Gastrocnemius medialis (tissue), 4 donors: ENCODE measurements at regions of chr2 and their contacts with region 1.

Region 1: GRCh38 chr2:160994141-160995002 is 165.9 kb upstream of the TANK start:
- DNase-seq: peak; percentile 71 to 72
- ATAC-seq: peak; percentile 100
- H3K4me3 ChIP-seq: peak overlapping the region in 1 of 4 donors; percentile 6
- H3K27ac ChIP-seq: peak overlapping the region; percentile 36 to 76 (median 47)
- H3K4me1 ChIP-seq: peaks cover 0 to 6% of the 10 kb centered on the region in 2 donors
- H3K27me3 ChIP-seq: no peaks in the 10 kb centered on the region
- CTCF ChIP-seq: peak; percentile 75 to 88 (median 84)
- POLR2A ChIP-seq: no peak

Region 2: DNA sequence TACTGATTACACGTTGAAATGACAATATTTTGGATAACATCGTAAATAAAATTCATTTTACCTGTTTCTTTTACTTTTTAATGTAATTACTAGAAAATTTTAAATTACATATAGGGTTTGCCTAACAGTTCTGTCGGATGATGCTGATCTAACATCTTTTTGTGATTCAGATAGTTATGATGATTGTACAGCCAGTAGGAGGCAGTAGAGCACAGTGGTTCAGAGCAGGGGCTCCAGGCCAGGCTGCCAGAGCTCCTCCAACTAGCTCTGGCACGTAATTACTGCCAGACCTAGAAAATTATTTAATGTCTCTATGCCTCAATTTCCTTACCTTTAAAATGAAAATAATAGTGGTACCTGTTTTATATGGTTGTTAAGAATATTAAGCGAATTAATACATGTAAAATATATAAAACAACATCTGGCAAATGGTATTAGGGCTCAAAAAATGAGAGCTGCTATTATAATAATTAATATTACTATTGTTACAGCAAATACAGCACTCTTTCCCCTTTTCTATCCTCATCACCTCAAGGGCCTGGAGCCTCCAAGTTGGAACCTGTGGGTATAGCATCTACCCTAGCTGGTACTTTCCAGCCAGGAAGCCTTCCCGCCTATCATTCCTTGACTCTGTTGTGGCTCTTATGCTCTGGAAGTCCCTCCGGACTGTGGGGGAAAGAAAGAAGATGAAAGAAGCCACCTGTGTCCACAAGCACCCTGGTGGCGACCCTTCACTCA is 884.3 kb before region 1 on chr2:
- in situ Hi-C with region 1: loop called in 3 of 4 experiments (anchors 10 to 25 kb)
- intact Hi-C with region 1: loop called (anchors 1 kb)
- DNase-seq: peak; percentile 28 to 62
- ATAC-seq: peak; percentile 88 to 97
- H3K4me3 ChIP-seq: no peak overlapping the region
- H3K27ac ChIP-seq: peak overlapping the region in 2 of 4 donors; percentile 6 to 44
- H3K4me1 ChIP-seq: no peaks in the 10 kb centered on the region
- H3K27me3 ChIP-seq: no peaks in the 10 kb centered on the region
- CTCF ChIP-seq: peak; percentile 65 to 86 (median 75)
- POLR2A ChIP-seq: no peak

Region 3: DNA sequence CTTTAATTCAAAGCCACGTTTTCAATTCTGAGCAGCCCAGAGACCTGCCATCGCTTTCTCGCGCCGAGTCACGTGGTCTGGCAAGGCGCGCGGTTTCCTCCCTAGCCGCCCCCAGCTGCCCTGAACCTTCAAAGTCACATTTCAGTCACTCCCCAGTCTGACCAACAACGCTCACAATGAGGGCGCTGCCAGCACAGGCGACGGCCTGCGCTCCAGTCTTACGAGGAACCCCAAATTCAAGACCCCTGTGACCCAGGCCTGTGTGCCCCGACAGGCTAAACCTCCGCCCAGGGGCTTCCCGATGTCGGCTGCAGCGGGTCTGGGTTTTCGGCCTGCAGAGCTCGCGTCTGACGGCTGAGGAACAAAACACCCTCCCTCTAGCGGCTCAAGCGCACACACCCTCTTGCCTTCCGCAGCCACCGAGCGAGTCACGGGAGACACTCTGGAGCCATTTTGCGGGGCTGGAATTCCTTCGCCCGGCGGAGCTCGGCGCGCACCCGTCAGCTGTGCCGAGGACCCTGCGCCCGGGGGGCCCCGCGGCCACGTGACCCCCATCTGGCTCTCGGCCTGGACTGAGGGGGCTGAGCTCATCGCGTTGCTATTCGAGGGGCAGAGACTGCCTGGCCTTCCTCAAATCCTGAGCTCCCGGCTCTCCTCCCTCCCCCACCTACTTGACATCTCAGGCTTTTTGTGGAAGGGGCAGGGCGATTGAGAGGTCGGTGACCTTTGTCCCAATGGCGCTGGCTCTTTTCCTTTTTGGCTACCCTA is 724.4 kb before region 1 on chr2:
- in situ Hi-C with region 1: no loop called
- intact Hi-C with region 1: loop called (anchors 5 kb)
- DNase-seq: peak; percentile 80 to 87
- ATAC-seq: peak; percentile 85 to 93
- H3K4me3 ChIP-seq: peak overlapping the region; percentile 62 to 84 (median 74)
- H3K27ac ChIP-seq: peak overlapping the region; percentile 93 to 99 (median 98)
- H3K4me1 ChIP-seq: peaks cover 11 to 24% of the 10 kb centered on the region in 2 donors
- H3K27me3 ChIP-seq: no peaks in the 10 kb centered on the region
- CTCF ChIP-seq: peak; percentile 69 to 88 (median 86)
- POLR2A ChIP-seq: peak; percentile 61 to 63

Region 4: GRCh38 chr2:160429248-160430000 is 564.9 kb before region 1 on chr2:
- in situ Hi-C with region 1: loop called in 1 of 4 experiments (anchors 10 kb)
- intact Hi-C with region 1: no loop called
- DNase-seq: no peak
- ATAC-seq: peak in 1 of 2 donors; percentile 47
- H3K4me3 ChIP-seq: no peak overlapping the region
- H3K27ac ChIP-seq: peak overlapping the region; percentile 4 to 63 (median 49)
- H3K4me1 ChIP-seq: peaks cover 36 to 38% of the 10 kb centered on the region in 2 donors
- H3K27me3 ChIP-seq: no peaks in the 10 kb centered on the region
- CTCF ChIP-seq: peak in 4 of 5 experiments; percentile 38 to 65 (median 56)
- POLR2A ChIP-seq: no peak

Region 5: DNA sequence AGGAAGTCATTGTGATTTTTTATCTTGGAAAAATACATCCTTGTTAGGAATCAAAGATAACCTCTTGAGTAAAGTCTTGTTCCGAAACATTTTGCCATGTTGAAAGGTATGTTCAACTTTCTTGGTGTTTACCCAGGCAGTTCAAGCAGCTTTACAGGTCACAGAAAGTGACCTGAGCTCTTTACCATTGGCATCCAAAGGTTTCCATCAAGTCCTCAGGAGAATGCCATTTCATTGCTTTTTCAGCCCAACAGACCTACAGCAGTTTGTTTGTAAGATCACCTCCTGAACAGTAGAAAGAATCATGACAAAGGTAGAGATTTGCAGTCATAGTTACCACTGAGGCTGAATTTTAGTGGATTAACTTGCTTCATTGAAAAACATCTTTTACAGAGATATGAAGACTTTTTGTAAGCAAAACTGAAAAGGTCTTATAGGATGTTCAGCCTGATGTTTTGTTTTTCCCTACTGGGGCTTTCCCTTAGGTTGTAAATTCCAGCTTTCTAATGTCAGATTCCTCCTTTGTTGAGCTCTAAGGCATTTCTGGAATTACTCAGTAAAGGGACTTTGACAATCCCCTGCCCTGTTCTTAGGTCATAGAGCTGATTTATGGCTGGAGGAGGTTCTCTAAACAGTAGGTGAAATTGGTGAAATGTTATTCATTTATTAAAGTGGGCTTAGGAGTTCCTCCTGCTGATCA is 263.9 kb before region 1 on chr2:
- in situ Hi-C with region 1: no loop called
- intact Hi-C with region 1: no loop called
- DNase-seq: no peak
- ATAC-seq: no peak
- H3K4me3 ChIP-seq: no peak overlapping the region
- H3K27ac ChIP-seq: no peak overlapping the region
- H3K4me1 ChIP-seq: no peaks in the 10 kb centered on the region
- H3K27me3 ChIP-seq: no peaks in the 10 kb centered on the region
- CTCF ChIP-seq: no peak
- POLR2A ChIP-seq: no peak

Region 6: DNA sequence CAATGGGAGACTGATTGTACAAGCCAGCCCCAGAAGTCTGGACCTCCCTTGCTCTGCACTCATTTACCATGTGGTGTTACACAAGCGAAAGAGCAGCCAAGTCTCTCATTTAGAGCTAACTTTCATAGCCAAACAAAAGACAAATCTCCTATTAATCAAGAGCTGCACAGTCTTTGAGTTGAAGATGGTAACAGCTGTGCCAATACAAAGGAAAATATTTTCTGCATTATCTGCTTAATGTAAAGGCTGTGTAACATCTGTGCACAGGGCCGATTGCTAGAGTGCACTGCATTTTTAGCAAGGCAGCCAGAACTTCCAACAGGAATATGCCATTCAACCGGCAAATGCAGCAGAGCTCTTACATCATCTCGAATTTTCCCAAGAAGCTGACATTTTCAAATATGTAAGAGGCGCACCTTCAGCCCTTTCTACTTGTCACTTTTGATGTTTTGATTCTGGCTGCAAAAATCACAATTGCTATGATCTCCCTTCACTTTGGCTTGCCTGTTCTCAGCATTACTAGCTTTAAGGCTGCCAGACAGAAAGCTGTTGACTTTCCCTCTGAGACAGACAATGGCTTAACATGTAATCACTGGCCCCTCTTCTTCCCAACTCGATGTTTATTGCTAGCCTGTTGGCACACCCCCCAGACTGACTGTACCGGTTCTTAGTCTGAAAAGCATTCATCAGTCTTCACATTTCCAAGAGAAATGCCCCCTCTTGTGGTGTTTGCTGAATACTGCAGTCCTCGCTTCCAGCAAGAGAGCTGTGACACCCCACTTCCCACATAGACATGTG is 69.0 kb after region 1 on chr2:
- in situ Hi-C with region 1: no loop called
- intact Hi-C with region 1: loop called (anchors 5 kb)
- DNase-seq: peak; percentile 62 to 68
- ATAC-seq: peak; percentile 76 to 91
- H3K4me3 ChIP-seq: peak overlapping the region in 1 of 4 donors; percentile 26
- H3K27ac ChIP-seq: no peak overlapping the region
- H3K4me1 ChIP-seq: peaks cover 0 to 21% of the 10 kb centered on the region in 2 donors
- H3K27me3 ChIP-seq: no peaks in the 10 kb centered on the region
- CTCF ChIP-seq: peak; percentile 76 to 92 (median 79)
- POLR2A ChIP-seq: no peak

Region 7: DNA sequence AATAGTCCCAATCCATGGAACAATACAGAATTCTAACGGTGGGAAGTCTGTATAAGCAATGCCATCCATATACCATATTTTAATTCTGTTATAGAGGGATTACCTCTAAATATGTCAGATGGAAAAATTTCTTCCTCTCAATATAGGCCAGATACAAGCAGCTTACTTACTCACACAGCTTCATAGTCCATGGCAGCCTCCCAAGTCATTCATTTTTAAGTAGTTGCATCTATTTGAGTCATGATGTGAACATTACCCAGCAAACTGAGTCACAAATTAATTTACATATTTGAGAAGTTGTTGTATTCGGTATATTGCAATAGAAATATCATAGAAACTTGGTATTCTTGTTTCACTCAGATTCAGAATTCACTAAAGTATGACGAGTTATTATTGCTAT is 442.0 kb after region 1 on chr2:
- in situ Hi-C with region 1: no loop called
- intact Hi-C with region 1: no loop called
- DNase-seq: no peak
- ATAC-seq: no peak
- H3K4me3 ChIP-seq: no peak overlapping the region
- H3K27ac ChIP-seq: no peak overlapping the region
- H3K4me1 ChIP-seq: no peaks in the 10 kb centered on the region
- H3K27me3 ChIP-seq: peaks cover 0 to 15% (median 13%) of the 10 kb centered on the region in 3 donors
- CTCF ChIP-seq: no peak
- POLR2A ChIP-seq: no peak